Activated naive CD4-positive, alpha-beta T cell treated with anti-CD3 and anti-CD28 coated beads, Interleukin-2, amount 10 ng/mL, durations not matched to agents 7 days and 5 days (primary cell): ENCODE measurements at regions of chr2 and their contacts with region 1.

Region 1: GRCh38 chr2:152730591-152731303 is 12.3 kb downstream of the ARL6IP6 start:
- DNase-seq: peak; percentile 67
- H3K4me3 Mint-ChIP-seq: no peak overlapping the region
- H3K27ac Mint-ChIP-seq: no peak overlapping the region
- H3K4me1 Mint-ChIP-seq: peaks cover 26% of the 10 kb centered on the region
- H3K27me3 Mint-ChIP-seq: no peaks in the 10 kb centered on the region

Region 2: DNA sequence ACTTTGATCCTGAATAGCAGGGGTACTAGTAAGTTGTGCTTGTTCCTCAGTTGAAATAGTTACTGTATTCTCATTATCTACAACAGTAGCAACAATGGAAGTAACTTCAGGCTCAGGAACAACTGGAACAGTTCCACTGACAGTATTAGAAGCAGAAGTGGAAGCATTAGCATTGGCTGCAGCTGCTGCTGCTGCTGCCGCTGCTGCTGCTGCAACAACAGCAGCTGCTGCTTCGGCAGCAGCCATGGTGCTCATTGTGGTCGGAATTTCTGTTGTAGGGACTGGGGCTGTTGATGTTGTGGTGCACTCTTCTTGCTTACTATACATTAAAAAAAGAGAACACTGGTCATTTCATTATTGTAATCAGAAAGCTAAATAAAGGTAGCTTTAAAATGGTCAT is 54.3 kb before region 1 on chr2:
- CTCF ChIA-PET with region 1: no interaction called
- DNase-seq: no peak
- H3K4me3 Mint-ChIP-seq: no peak overlapping the region
- H3K27ac Mint-ChIP-seq: no peak overlapping the region
- H3K4me1 Mint-ChIP-seq: no peaks in the 10 kb centered on the region
- H3K27me3 Mint-ChIP-seq: no peaks in the 10 kb centered on the region

Region 3: DNA sequence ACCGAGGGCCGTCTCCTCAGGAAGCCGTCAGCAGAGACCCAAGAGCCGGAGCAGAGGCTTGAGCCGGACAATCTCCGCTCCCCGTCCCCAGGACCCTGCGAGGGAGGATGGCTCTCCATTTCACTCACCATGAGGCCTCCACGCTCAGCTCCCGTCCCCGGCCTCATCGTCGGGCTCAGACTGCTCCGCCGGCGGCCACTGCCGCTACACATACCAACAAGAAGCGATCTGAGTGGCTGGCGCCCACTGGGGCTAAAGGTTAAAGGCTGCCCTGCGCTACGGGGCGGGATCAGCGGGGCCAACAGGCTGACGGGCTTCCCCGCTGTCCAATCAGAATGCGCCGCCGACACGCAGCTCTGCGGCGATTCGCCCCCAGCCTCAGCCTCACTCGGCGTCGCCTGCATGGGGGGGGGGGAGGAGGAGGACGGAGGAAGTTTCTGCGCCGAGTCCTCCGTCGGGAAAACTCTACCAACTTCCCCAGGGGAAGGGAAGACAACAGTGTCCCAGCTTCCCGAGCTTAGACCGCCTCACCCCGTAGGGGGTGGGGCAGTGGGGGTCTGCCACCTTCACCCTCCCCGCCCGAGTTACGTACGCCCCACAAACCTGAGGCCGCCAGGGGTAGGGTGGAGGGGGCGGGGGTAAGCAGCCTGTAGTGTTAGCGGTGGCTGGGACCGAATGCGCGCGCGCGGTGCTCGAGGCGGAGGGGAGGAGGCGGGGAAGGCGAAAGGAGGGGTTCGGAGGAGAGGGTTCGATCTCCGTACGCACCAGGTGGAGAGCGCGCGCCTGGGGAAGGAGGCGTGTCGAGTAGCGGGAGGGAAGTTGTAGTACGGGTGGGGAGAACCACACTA is 13.3 kb before region 1 on chr2 and contains the start of gene PRPF40A:
- CTCF ChIA-PET with region 1: interaction called, 10 read pairs
- DNase-seq: peak; percentile 99
- H3K4me3 Mint-ChIP-seq: peak within 1 kb of the TSS; percentile 96
- H3K27ac Mint-ChIP-seq: peak within 1 kb of the TSS; percentile 97
- H3K4me1 Mint-ChIP-seq: peaks cover 54% of the 10 kb centered on the region
- H3K27me3 Mint-ChIP-seq: peaks cover 9% of the 10 kb centered on the region